Ovary (tissue), 10 donors: ENCODE measurements at regions of chr20 and their contacts with region 1.

Region 1: DNA sequence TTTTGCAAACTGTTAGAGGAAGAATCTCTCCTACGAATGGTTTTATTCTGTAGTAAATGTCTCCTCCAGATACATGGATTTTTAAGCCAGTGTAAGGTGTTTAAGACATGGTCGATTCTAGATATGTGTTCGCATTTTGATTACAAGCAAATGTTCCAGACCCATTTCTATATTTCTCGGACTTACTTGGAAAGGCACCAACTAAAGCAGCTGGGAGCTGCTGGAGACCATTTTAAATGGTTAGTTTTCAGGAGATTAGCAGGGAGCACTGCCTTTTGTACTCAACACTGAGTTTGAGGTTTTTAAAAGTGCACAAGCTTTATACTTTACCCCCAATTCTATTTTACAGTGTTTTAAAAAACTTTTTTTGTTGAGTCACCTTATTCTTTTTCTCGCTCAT is 857.0 kb downstream of the KIF16B start:
- DNase-seq: no peak
- H3K4me3 ChIP-seq: no peak overlapping the region
- H3K27ac ChIP-seq: no peak overlapping the region
- H3K4me1 ChIP-seq: no peaks in the 10 kb centered on the region
- H3K27me3 ChIP-seq: no peaks in the 10 kb centered on the region
- CTCF ChIP-seq: no peak
- EP300 ChIP-seq: no peak
- POLR2A ChIP-seq: no peak

Region 2: GRCh38 chr20:17161673-17162481 is 1445.6 kb after region 1 on chr20:
- intact Hi-C with region 1: loop called in 1 of 4 experiments (anchors 5 kb)
- DNase-seq: no peak
- H3K4me3 ChIP-seq: no peak overlapping the region
- H3K27ac ChIP-seq: no peak overlapping the region
- H3K4me1 ChIP-seq: peaks cover 6% of the 10 kb centered on the region
- H3K27me3 ChIP-seq: no peaks in the 10 kb centered on the region
- CTCF ChIP-seq: no peak
- EP300 ChIP-seq: no peak
- POLR2A ChIP-seq: no peak